HepG2 (cell line): ENCODE measurements at regions of chr15 and their contacts with region 1.

Region 1: GRCh38 chr15:67065444-67066093 is at the start of gene SMAD3:
- DNase-seq: peak; percentile 86
- ATAC-seq: peak; percentile 67
- H3K4me3 ChIP-seq: peak within 1 kb of the TSS; percentile 78 to 98 (median 92)
- H3K27ac ChIP-seq: peak within 1 kb of the TSS; percentile 94
- H3K4me1 ChIP-seq: peaks cover 64% of the 10 kb centered on the region
- H3K27me3 ChIP-seq: no peaks in the 10 kb centered on the region; a peak in 1 of 5 replicates
- CTCF ChIP-seq: no peak
- EP300 ChIP-seq: no peak; a peak in 1 of 4 replicates
- POLR2A ChIP-seq: peak; percentile 78 to 82
- RAD21 ChIP-seq: peak; percentile 61
- total RNA-seq, gene SMAD3: 8.6 and 10.0 TPM in 2 replicates

Region 2: GRCh38 chr15:66946578-66947164 is 118.9 kb before region 1 on chr15:
- CTCF ChIA-PET with region 1: no interaction called
- POLR2A ChIA-PET with region 1: interaction called, 6 read pairs
- in situ Hi-C with region 1: loop called (anchors 5 kb)
- intact Hi-C with region 1: no loop called
- DNase-seq: peak; percentile 67
- ATAC-seq: peak; percentile 65
- H3K4me3 ChIP-seq: peak overlapping the region in 1 of 3 experiments; percentile 25; a peak in 1 of 6 replicates
- H3K27ac ChIP-seq: no peak overlapping the region
- H3K4me1 ChIP-seq: peaks cover 42% of the 10 kb centered on the region
- H3K27me3 ChIP-seq: peaks cover 1 to 16% of the 10 kb centered on the region in 2 experiments; a peak in 3 of 5 replicates
- CTCF ChIP-seq: peak; percentile 93
- EP300 ChIP-seq: no peak
- POLR2A ChIP-seq: no peak
- RAD21 ChIP-seq: peak; percentile 89

Region 3: DNA sequence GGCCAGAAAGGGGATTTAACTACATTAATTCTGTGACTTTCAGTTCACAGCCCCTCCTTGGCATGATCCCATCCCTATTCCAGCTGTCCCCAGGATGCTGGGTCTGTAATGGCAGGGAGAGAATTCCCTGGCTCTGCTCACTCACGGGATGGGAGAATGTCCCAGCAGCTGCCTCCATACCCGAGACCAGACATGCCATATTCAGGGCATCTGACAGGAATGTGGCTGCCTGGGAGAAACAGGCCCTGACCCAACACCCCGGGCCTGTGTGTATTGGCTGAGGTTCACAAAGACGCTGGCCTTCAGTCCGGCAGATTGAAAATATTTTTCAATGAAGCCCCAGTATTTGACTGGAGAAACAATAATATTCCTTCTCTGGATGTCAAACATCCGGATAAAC is 83.8 kb before region 1 on chr15:
- CTCF ChIA-PET with region 1: no interaction called
- POLR2A ChIA-PET with region 1: no interaction called
- in situ Hi-C with region 1: no loop called
- intact Hi-C with region 1: no loop called
- DNase-seq: no peak
- ATAC-seq: no peak; the same call in 2 of the 3 replicates
- H3K4me3 ChIP-seq: no peak overlapping the region
- H3K27ac ChIP-seq: no peak overlapping the region
- H3K4me1 ChIP-seq: peaks cover 5% of the 10 kb centered on the region; the same call in 1 of the 2 replicates
- H3K27me3 ChIP-seq: no peaks in the 10 kb centered on the region
- CTCF ChIP-seq: no peak
- EP300 ChIP-seq: no peak
- POLR2A ChIP-seq: no peak
- RAD21 ChIP-seq: no peak

Region 4: GRCh38 chr15:67030036-67030762 is 35.4 kb before region 1 on chr15:
- CTCF ChIA-PET with region 1: no interaction called
- POLR2A ChIA-PET with region 1: interaction called, 18 read pairs
- in situ Hi-C with region 1: no loop called
- intact Hi-C with region 1: no loop called
- DNase-seq: peak; percentile 82
- ATAC-seq: peak; percentile 89
- H3K4me3 ChIP-seq: peak overlapping the region in 1 of 3 experiments; percentile 14; a peak in 1 of 6 replicates
- H3K27ac ChIP-seq: peak overlapping the region; percentile 49
- H3K4me1 ChIP-seq: peaks cover 59% of the 10 kb centered on the region
- H3K27me3 ChIP-seq: no peaks in the 10 kb centered on the region
- CTCF ChIP-seq: no peak
- EP300 ChIP-seq: peak in 1 of 2 experiments; percentile 61; a peak in 1 of 4 replicates
- POLR2A ChIP-seq: no peak
- RAD21 ChIP-seq: no peak

Region 5: GRCh38 chr15:67080900-67081431 is 15.4 kb after region 1 on chr15:
- CTCF ChIA-PET with region 1: no interaction called
- POLR2A ChIA-PET with region 1: interaction called, 31 read pairs
- in situ Hi-C with region 1: no loop called
- intact Hi-C with region 1: no loop called
- DNase-seq: no peak
- ATAC-seq: peak; percentile 23; the same call in 1 of the 3 replicates
- H3K4me3 ChIP-seq: no peak overlapping the region
- H3K27ac ChIP-seq: no peak overlapping the region
- H3K4me1 ChIP-seq: peaks cover 94% of the 10 kb centered on the region
- H3K27me3 ChIP-seq: no peaks in the 10 kb centered on the region
- CTCF ChIP-seq: peak; percentile 38; the same call in 1 of the 2 replicates
- EP300 ChIP-seq: no peak
- POLR2A ChIP-seq: no peak
- RAD21 ChIP-seq: no peak

Region 6: DNA sequence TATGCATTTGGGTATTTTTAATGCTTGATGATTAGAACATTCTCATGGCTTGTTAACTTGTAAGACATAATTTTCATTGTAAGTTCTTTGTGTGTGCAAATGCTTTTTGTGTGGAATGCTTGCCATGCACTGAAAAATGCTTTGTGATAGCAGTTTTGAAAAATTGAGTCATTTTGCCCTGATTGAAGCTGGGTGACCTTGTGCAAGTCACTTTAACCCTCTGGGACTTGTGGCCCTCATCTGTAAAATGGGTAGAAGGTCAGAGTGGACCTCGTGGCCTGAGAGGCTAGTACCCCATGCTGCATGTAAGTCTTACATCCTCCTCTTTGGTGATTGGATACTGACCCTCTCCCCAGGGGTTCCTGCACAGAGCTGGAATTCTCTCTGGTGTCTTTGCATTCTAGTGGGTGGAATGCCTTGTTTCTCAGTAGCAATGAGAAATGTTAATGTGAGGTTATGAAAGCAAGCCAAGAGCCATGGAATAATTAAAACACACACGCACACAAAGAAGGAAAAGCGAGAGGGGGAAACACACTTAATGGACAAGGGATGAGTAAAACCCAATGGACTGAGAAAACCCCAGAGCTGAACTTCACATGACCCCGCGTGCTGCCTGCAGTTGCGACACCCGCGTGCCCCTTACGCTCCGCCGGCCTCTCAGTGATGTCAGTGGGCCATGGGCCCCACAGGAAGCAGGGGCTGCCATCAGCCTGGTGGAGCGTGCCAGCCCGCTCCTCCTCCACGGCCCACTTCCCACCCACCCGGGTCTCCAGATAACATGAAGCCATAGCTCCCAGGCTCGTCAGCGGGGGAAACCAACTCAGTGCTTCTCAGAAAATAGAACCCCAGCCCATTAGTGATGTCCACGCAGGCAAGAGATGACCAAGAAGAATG is 43.8 kb after region 1 on chr15:
- CTCF ChIA-PET with region 1: no interaction called
- POLR2A ChIA-PET with region 1: interaction called, 64 read pairs
- in situ Hi-C with region 1: no loop called
- intact Hi-C with region 1: loop called (anchors 2 kb)
- DNase-seq: peak; percentile 61
- ATAC-seq: no peak
- H3K4me3 ChIP-seq: no peak overlapping the region
- H3K27ac ChIP-seq: peak overlapping the region; percentile 16
- H3K4me1 ChIP-seq: peaks cover 73% of the 10 kb centered on the region
- H3K27me3 ChIP-seq: no peaks in the 10 kb centered on the region
- CTCF ChIP-seq: no peak
- EP300 ChIP-seq: no peak; a peak in 1 of 4 replicates
- POLR2A ChIP-seq: no peak
- RAD21 ChIP-seq: no peak

Region 7: DNA sequence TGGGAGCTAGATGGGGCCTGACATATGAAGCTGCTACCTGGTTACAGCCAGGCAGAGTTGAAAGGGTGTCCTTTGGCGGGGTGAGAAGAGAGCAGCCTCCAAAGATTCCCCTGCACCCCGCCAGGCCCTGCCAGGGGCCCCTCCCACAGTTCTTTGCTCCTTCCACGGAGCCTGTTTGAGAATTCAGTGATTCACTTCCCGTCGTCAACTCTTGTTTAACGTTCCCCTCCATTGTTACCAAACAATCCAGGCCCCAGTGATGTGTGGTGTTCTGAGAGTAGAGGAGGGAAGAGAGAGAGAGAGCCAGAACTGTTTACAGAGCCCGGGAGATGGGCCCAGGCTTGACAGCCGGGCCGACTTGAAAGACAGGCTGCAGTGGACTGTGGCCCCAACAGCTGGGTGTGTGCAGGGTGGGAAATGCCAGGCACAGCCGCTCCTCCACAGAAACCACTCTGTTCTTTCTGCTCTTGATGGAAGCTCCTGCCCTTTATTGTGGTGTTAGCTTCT is 81.4 kb after region 1 on chr15:
- CTCF ChIA-PET with region 1: no interaction called
- POLR2A ChIA-PET with region 1: interaction called, 17 read pairs
- in situ Hi-C with region 1: no loop called
- intact Hi-C with region 1: loop called (anchors 5 kb)
- DNase-seq: peak; percentile 97
- ATAC-seq: peak; percentile 94
- H3K4me3 ChIP-seq: peak overlapping the region; percentile 30 to 44 (median 35); a peak in 4 of 6 replicates
- H3K27ac ChIP-seq: peak overlapping the region; percentile 76
- H3K4me1 ChIP-seq: peaks cover 83% of the 10 kb centered on the region
- H3K27me3 ChIP-seq: no peaks in the 10 kb centered on the region
- CTCF ChIP-seq: no peak
- EP300 ChIP-seq: peak; percentile 37 to 88; a peak in 3 of 4 replicates
- POLR2A ChIP-seq: no peak
- RAD21 ChIP-seq: no peak

Region 8: DNA sequence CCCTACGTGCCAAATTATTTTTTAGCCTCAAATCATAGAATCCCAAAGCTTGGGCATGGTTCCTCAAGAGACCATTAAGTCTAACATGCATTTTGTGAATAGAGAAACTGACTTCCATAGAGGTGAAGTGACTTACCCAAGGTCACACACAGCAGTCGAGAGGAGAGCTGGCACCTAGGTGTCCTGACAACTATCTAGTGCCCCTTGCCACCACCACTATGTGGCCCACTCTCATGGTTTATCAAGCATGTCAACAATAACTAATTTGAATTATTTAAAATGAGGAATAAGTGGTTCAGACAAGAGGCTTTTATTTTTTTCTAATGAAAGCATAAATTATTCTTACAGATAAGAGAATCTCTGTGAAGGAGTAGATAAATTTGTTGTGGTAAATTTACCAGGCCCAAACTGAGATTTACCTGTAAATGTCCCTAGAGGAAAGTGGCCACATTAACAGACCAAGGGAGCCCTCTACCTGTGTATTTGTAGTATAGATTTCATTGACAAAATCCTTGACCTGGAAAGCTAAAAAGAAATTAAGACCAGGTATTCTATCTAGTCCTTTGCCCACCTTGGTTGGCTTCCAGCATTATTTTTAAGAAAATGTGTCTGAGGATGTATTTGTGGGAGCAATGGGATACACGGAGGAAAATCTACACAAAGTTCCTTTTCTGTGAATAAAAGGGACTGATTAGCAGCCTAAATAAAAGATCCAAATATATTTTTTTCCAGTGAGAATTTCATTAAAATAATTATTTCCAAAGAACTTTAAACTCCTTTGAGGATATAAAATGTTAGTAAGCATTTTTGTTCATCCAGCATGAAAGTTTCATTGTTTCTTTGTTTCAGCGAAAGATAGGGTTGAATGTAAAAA is 238.2 kb after region 1 on chr15:
- CTCF ChIA-PET with region 1: no interaction called
- POLR2A ChIA-PET with region 1: no interaction called
- in situ Hi-C with region 1: no loop called
- intact Hi-C with region 1: loop called (anchors 2 kb)
- DNase-seq: peak; percentile 49
- ATAC-seq: peak; percentile 64
- H3K4me3 ChIP-seq: no peak overlapping the region
- H3K27ac ChIP-seq: no peak overlapping the region
- H3K4me1 ChIP-seq: no peaks in the 10 kb centered on the region
- H3K27me3 ChIP-seq: no peaks in the 10 kb centered on the region
- CTCF ChIP-seq: peak; percentile 70
- EP300 ChIP-seq: no peak
- POLR2A ChIP-seq: no peak
- RAD21 ChIP-seq: peak; percentile 45; the same call in 1 of the 2 replicates